BJ (cell line): ENCODE measurements at regions of chr2 and their contacts with region 1.

Region 1: DNA sequence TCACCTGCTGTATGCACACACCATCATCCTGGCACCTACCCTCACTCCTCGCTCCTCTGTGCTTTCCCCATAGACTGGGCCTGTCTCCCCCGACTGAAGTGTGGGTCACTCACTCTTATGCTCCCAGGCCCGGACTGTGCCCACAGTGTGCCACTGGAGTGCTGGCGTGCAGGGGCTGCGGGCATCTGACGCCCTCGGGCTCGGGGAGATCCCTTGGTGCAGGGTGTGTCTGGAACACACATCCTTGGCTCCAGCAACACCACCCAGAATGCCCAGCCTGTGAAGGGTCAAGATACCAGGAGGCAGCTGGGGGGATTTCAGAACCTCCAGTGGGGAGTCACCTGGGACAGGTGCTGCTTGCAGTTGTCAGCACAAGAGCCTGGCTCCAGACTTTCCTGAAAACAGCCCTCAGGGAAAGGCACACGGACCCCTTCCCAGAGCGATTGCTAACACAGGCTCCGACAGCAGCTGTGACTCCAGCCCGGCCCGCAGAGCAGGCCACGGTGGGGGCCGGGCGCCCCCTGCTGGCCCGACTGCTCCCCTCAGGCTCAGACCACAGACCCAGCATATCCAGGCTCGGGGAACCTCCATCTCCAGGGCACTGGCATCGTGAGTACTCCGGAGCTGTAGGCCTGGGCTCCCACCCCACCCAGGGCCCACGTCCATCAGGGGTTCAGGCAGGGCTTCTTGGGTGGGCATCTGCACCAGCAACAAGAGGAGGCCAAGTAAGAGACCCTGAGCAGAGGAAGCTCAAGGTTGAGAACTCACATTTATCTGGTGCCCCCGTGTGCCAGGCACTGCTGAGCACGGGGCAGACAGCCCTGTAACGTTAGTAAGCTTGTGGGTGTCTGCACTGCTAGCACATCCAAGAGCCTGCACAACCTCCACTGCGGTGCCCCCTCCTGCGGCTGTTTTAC is 8.6 kb downstream of the HS1BP3 start:
- DNase-seq: no peak
- H3K4me3 ChIP-seq: no peak overlapping the region
- H3K27me3 ChIP-seq: no peaks in the 10 kb centered on the region
- CTCF ChIP-seq: peak; percentile 98

Region 2: GRCh38 chr2:20384953-20385352 is 257.4 kb before region 1 on chr2:
- CTCF ChIA-PET with region 1: interaction called, 77 read pairs
- POLR2A ChIA-PET with region 1: no interaction called
- DNase-seq: no peak
- H3K4me3 ChIP-seq: no peak overlapping the region
- H3K27me3 ChIP-seq: peaks cover 7% of the 10 kb centered on the region
- CTCF ChIP-seq: no peak

Region 3: DNA sequence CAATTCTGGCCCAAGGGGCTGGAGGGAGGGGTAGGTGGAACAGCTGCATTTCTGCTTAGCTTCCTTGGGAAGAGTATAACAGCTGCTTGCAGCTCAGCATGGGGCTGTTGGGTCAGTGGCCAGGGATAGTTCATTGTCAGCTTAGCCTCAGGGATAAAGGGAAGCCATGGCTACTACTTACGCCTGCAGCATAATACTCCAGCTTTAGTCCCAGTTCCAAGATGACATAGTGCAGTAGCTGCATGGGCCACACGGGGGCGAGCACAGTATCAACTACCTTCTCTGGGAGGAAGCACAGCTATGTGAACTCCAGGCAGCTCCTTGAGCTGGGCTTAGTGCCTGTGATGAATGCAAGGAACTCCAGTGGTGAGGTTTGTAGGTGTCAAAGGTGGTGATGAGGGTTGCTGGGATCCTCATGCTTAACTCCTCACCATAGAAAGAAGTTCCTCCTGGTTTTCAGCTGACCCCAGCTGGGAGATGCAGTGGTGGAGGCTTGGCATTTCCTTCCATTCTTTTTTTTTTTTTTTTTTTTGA is 230.9 kb before region 1 on chr2:
- CTCF ChIA-PET with region 1: interaction called, 138 read pairs
- POLR2A ChIA-PET with region 1: no interaction called
- DNase-seq: no peak
- H3K4me3 ChIP-seq: no peak overlapping the region
- H3K27me3 ChIP-seq: peaks cover 13% of the 10 kb centered on the region
- CTCF ChIP-seq: peak; percentile 93

Region 4: DNA sequence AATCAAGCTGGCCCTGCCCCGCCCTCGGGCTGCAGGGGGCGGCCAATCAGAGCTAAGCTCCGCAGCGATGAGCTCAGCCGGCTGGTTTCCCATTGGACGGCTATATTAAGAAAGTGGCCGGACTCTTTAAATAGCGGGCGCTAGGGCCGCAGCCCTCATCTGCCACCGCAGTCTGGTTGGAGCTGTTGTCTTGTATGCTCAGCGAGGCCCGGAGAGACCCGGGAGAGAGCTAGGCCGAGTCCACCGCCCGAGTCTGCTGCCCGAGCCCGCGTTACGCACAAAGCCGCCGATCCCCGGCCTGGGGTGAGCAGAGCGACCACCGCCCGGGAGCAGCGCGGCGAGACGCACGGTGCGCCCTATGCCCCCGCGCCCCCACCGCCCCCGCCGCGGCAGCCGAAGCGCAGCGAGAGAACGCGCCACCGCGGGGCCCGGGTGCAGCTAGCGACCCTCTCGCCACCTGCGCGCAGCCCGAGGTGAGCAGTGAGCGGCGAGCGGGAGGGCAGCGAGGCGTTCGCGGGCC is 195.3 kb before region 1 on chr2 and contains the start of gene RHOB:
- CTCF ChIA-PET with region 1: interaction called, 51 read pairs
- POLR2A ChIA-PET with region 1: no interaction called
- DNase-seq: peak; percentile 93
- H3K4me3 ChIP-seq: peak within 1 kb of the TSS; percentile 80
- H3K27me3 ChIP-seq: no peaks in the 10 kb centered on the region
- CTCF ChIP-seq: no peak
- polyA plus RNA-seq, gene RHOB: 76.7 and 87.2 TPM in 2 replicates

Region 5: GRCh38 chr2:20625491-20626391 is 16.6 kb before region 1 on chr2:
- CTCF ChIA-PET with region 1: interaction called, 11 read pairs
- POLR2A ChIA-PET with region 1: no interaction called
- DNase-seq: no peak
- H3K4me3 ChIP-seq: no peak overlapping the region
- H3K27me3 ChIP-seq: no peaks in the 10 kb centered on the region
- CTCF ChIP-seq: peak; percentile 32; the same call in 1 of the 2 replicates

Region 6: GRCh38 chr2:20868377-20868776 is 226.1 kb after region 1 on chr2:
- CTCF ChIA-PET with region 1: no interaction called
- POLR2A ChIA-PET with region 1: no interaction called
- DNase-seq: no peak
- H3K4me3 ChIP-seq: no peak overlapping the region
- H3K27me3 ChIP-seq: no peaks in the 10 kb centered on the region
- CTCF ChIP-seq: no peak

Region 7: DNA sequence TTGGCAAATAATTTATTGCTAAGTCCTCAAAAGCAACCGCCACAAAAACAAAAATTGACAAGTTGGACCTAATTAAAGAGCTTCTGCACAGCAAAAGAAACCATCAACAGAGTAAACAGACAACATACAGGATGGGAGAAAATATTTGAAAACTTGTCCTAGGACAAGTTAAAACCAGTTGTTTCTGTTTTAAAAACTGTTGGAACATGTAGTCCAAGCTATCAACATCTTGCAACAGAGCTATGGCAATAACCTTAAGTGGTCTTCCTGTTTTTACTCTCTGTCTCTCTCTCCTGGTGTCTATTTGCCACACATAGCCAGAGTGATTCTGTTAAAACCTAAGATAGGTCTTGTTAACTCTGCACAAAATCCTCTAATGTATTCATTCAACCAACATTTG is 245.9 kb after region 1 on chr2:
- CTCF ChIA-PET with region 1: no interaction called
- POLR2A ChIA-PET with region 1: no interaction called
- DNase-seq: no peak
- H3K4me3 ChIP-seq: no peak overlapping the region
- H3K27me3 ChIP-seq: no peaks in the 10 kb centered on the region; the same call in 1 of the 2 replicates
- CTCF ChIP-seq: no peak